Endothelial cell of umbilical vein (primary cell): ENCODE measurements at regions of chr1 and their contacts with region 1.

Region 1: DNA sequence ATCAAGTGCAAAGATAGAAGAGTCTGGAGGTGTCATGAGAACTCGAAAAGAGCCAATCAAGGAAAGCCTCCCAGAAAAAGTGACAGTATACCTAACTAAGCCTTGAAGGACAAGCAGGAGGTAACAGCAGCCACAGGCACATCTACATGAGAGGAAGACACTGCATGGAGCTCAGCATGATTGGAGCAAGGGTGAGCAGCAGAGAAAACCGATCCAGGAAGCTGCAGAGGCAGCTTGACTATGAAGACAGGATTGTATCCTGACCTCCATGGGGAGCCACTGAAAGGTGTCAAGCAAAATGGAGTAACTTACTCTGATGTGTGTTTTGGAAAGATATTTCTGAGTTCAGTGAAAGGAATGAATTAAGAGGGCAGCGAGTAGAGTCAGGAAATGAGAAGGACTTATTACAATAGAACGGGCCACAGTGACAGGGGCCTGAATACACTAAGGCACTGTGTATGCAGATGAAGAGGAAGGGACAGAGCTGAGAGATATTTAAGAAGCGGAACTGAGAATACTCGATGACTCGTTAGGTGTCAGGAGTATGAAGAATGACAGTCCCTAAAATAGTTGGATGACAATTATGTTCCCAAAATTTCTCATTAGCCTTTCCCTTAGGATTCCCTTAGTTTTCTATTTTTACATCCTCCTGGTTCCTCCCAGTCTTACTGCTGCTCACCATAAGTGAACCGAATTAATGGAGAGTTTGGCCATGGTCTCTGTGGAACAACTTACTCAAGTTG is 139.3 kb upstream of the NFIA start:
- DNase-seq: peak; percentile 36
- H3K4me3 ChIP-seq: no peak overlapping the region
- H3K27ac ChIP-seq: peak overlapping the region; percentile 5
- H3K4me1 ChIP-seq: peaks cover 29% of the 10 kb centered on the region
- H3K27me3 ChIP-seq: no peaks in the 10 kb centered on the region
- CTCF ChIP-seq: no peak
- POLR2A ChIP-seq: no peak

Region 2: GRCh38 chr1:60126723-60127122 is 816.3 kb before region 1 on chr1:
- CTCF ChIA-PET with region 1: no interaction called
- POLR2A ChIA-PET with region 1: no interaction called
- dilution Hi-C with region 1: no loop called
- intact Hi-C with region 1: no loop called
- DNase-seq: no peak
- H3K4me3 ChIP-seq: no peak overlapping the region
- H3K27ac ChIP-seq: no peak overlapping the region
- H3K4me1 ChIP-seq: no peaks in the 10 kb centered on the region
- H3K27me3 ChIP-seq: no peaks in the 10 kb centered on the region
- CTCF ChIP-seq: no peak
- POLR2A ChIP-seq: no peak

Region 3: GRCh38 chr1:60874716-60875115 is 68.4 kb before region 1 on chr1:
- CTCF ChIA-PET with region 1: no interaction called
- POLR2A ChIA-PET with region 1: no interaction called
- dilution Hi-C with region 1: no loop called
- intact Hi-C with region 1: loop called (anchors 2 kb)
- DNase-seq: peak; percentile 82
- H3K4me3 ChIP-seq: no peak overlapping the region
- H3K27ac ChIP-seq: peak overlapping the region; percentile 36
- H3K4me1 ChIP-seq: peaks cover 21% of the 10 kb centered on the region
- H3K27me3 ChIP-seq: no peaks in the 10 kb centered on the region
- CTCF ChIP-seq: no peak
- POLR2A ChIP-seq: no peak

Region 4: GRCh38 chr1:61518670-61519400 is 575.8 kb after region 1 on chr1:
- CTCF ChIA-PET with region 1: no interaction called
- POLR2A ChIA-PET with region 1: no interaction called
- dilution Hi-C with region 1: no loop called
- intact Hi-C with region 1: no loop called
- DNase-seq: no peak
- H3K4me3 ChIP-seq: no peak overlapping the region
- H3K27ac ChIP-seq: no peak overlapping the region
- H3K4me1 ChIP-seq: no peaks in the 10 kb centered on the region
- H3K27me3 ChIP-seq: no peaks in the 10 kb centered on the region
- CTCF ChIP-seq: no peak
- POLR2A ChIP-seq: no peak